ENCODE measurements at regions of chr12 and their contacts with region 1.

Region 1: GRCh38 chr12:25186788-25187397 is 8.1 kb downstream of the DNAI7 start:
- DNase-seq: peak in 2 of 9 experiments; percentile 46 to 61
- ATAC-seq: peak; percentile 75
- H3K4me3 ChIP-seq: peak overlapping the region; percentile 34 to 36
- H3K4me3 Mint-ChIP-seq: peak overlapping the region; percentile 86
- H3K27ac ChIP-seq: peak overlapping the region; percentile 11 to 26
- H3K27ac Mint-ChIP-seq: peak overlapping the region; percentile 85
- H3K4me1 ChIP-seq: peaks cover 7% of the 10 kb centered on the region
- H3K4me1 Mint-ChIP-seq: peaks cover 13% of the 10 kb centered on the region
- H3K27me3 ChIP-seq: no peaks in the 10 kb centered on the region
- H3K27me3 Mint-ChIP-seq: no peaks in the 10 kb centered on the region
- CTCF ChIP-seq: no peak

Region 2: DNA sequence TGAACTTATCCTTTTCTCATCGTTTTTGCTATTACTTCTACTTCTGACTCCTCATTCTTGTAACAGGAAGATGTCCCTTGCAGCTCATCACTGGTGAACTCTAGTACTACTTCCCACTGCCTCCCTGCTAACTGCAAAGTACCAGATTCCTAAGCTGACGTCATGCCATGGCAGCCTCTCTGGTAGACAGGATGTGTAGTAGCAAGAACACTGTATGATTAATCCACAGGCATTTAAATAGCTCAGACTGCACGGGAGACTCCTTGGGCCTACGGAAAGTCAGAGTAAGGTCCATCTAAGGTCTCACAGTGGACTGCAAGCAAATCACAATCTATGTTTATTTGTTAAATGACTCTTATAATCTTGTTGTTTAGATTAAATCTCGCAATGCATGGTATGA is 35.4 kb before region 1 on chr12:
- CTCF ChIA-PET with region 1: interaction called, 7 read pairs
- POLR2A ChIA-PET with region 1: interaction called, 4 read pairs
- intact Hi-C with region 1: loop called in 1 of 2 experiments (anchors 2 kb)
- DNase-seq: no peak
- ATAC-seq: no peak
- H3K4me3 ChIP-seq: no peak overlapping the region
- H3K4me3 Mint-ChIP-seq: no peak overlapping the region
- H3K27ac ChIP-seq: no peak overlapping the region
- H3K27ac Mint-ChIP-seq: no peak overlapping the region
- H3K4me1 ChIP-seq: peaks cover 4% of the 10 kb centered on the region
- H3K4me1 Mint-ChIP-seq: peaks cover 5% of the 10 kb centered on the region
- H3K27me3 ChIP-seq: no peaks in the 10 kb centered on the region
- H3K27me3 Mint-ChIP-seq: no peaks in the 10 kb centered on the region
- CTCF ChIP-seq: no peak

Measured in CD8-positive, alpha-beta T cell (primary cell).